ENCODE measurements at regions of chr10 and their contacts with region 1.

Region 1: DNA sequence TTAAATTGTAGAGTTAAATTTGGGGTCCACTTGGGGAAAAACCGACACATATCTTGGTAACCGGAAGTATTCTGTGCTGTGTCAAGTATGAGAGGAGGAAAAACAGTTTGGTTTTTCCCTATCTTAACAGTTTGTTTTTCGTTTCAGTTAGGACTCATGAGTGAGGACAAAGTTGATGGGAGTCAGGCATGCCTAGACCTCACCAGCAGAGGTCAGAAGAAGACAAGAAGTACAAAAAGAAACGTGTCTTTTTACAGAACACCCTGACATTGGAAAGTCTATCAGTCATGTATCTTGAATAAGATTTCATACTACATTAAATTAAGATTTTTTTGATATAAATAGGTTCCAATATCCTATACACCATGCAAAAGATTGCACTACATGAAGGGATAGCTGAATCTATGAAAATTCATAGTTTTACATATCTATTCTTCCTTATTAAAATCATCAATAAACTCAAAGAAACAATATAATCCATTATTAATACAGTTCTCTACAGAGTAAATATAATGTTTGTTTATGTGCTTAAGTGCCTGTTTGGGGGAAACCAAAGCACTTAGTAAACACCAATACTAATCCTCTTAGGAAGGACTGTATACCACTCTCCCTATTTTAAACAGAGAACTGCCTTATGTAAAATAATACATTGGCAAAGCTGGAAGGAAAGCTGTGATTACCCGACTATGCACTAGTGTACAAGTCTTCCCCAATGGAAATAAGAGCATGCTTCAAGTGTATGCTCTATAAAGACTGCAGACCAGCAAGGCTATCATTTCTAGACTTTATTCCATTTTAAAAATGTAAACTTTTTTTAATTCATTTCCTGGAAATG is 95.6 kb downstream of the USP6NL start:
- DNase-seq: peak in 1 of 2 donors; percentile 81
- ATAC-seq: peak; percentile 74 to 78 (median 75)
- H3K4me3 ChIP-seq: no peak overlapping the region
- H3K4me3 Mint-ChIP-seq: no peak overlapping the region
- H3K27ac ChIP-seq: no peak overlapping the region
- H3K27ac Mint-ChIP-seq: no peak overlapping the region
- H3K4me1 ChIP-seq: no peaks in the 10 kb centered on the region
- H3K4me1 Mint-ChIP-seq: no peaks in the 10 kb centered on the region
- H3K27me3 ChIP-seq: no peaks in the 10 kb centered on the region
- H3K27me3 Mint-ChIP-seq: no peaks in the 10 kb centered on the region
- CTCF ChIP-seq: peak; percentile 85

Region 2: GRCh38 chr10:11533328-11533781 is 17.5 kb after region 1 on chr10:
- intact Hi-C with region 1: no loop called
- DNase-seq: no peak
- ATAC-seq: no peak
- H3K4me3 ChIP-seq: no peak overlapping the region
- H3K4me3 Mint-ChIP-seq: no peak overlapping the region
- H3K27ac ChIP-seq: no peak overlapping the region
- H3K27ac Mint-ChIP-seq: no peak overlapping the region
- H3K4me1 ChIP-seq: no peaks in the 10 kb centered on the region
- H3K4me1 Mint-ChIP-seq: peaks cover 0 to 5% of the 10 kb centered on the region in 2 donors
- H3K27me3 ChIP-seq: no peaks in the 10 kb centered on the region
- H3K27me3 Mint-ChIP-seq: no peaks in the 10 kb centered on the region
- CTCF ChIP-seq: no peak

Region 3: DNA sequence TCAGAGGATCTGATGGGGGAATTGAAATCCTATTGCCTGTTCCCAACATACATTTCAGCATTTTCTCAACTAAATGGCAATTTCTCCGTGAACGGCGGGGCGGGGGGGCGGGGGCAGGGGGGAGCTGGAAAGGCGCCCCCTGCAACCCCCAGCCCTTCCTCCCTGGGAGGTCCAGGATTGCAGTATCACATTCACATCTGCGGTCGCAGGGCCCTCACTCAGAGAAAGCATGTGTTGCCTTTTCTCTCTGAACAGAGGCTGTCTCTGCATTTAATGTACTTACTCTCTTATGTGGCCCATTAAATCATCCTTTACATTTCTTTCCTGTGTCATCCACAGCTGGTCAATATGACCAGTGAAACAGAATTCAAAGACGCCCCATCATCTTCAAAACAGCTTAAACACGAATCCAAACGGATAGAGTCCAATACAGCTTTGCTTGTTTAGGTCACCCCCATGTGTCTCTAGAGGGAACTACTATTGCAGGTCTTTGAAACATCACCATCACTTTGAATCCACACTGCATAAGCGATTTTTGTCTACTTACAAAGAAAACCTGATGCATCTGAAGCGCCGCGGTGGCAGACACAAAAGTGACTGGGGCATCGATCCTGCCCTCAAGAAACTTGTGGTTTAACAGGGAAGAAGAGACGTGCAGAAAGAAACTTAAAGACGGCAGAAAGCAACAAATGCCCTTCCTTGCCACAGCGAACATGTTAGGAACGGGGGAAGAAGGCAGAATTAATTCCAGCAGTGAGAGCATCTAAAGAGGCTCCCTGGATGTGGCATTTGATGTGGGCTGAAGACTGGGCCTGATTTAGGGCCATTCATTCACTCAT is 209.3 kb after region 1 on chr10:
- intact Hi-C with region 1: loop called (anchors 1 kb)
- DNase-seq: peak in 1 of 2 donors; percentile 70
- ATAC-seq: peak in 2 of 3 donors; percentile 50 to 59
- H3K4me3 ChIP-seq: no peak overlapping the region
- H3K4me3 Mint-ChIP-seq: no peak overlapping the region
- H3K27ac ChIP-seq: no peak overlapping the region
- H3K27ac Mint-ChIP-seq: no peak overlapping the region
- H3K4me1 ChIP-seq: peaks cover 2% of the 10 kb centered on the region
- H3K4me1 Mint-ChIP-seq: peaks cover 5 to 6% of the 10 kb centered on the region in 2 donors
- H3K27me3 ChIP-seq: no peaks in the 10 kb centered on the region
- H3K27me3 Mint-ChIP-seq: peaks cover 5 to 7% of the 10 kb centered on the region in 2 donors
- CTCF ChIP-seq: peak; percentile 52

Region 4: DNA sequence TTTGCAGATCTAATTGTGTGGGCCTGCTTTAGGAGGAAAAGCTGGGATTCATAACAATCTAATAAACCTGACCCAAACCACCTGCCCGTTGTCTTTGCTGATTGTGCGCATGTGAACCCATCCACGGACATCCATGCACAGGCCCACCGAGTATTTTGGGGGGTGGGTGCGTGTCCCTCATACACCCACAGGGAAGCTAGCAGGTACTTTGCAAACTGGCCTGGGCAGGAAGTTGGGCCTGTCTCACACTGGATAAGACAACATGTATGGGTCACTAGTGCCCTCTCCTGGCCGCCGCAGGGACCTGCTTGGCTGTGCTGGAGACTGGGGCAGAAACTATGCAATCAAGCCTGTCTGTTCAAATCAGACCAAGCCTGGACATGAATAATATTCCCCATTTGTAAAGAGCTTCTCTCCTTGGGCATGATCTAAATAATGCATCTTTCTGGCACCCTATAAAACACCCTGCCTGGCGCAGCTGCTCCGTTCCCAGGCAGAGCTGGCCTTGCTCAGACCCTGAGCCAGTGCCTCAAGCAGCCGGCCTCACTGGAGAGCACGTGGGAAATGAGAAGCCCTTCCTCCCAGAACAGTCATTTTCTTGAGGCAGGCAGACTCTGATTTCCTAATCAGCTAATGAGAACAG is 242.1 kb after region 1 on chr10:
- intact Hi-C with region 1: loop called (anchors 1 kb)
- DNase-seq: peak; percentile 74 to 88
- ATAC-seq: peak; percentile 91 to 100 (median 100)
- H3K4me3 ChIP-seq: no peak overlapping the region
- H3K4me3 Mint-ChIP-seq: no peak overlapping the region
- H3K27ac ChIP-seq: no peak overlapping the region
- H3K27ac Mint-ChIP-seq: no peak overlapping the region
- H3K4me1 ChIP-seq: peaks cover 4% of the 10 kb centered on the region
- H3K4me1 Mint-ChIP-seq: peaks cover 0 to 4% of the 10 kb centered on the region in 2 donors
- H3K27me3 ChIP-seq: no peaks in the 10 kb centered on the region
- H3K27me3 Mint-ChIP-seq: no peaks in the 10 kb centered on the region
- CTCF ChIP-seq: peak; percentile 85